Activated CD4-positive, alpha-beta memory T cell treated with anti-CD3 and anti-CD28 coated beads, Interleukin-2, amount 10 ng/mL, durations not matched to agents 7 days and 5 days (primary cell): ENCODE measurements at regions of chr14 and their contacts with region 1.

Region 1: GRCh38 chr14:64726585-64726890 is 22.3 kb downstream of the PLEKHG3 start:
- DNase-seq: peak; percentile 59
- H3K4me3 Mint-ChIP-seq: no peak overlapping the region
- H3K27ac Mint-ChIP-seq: peak overlapping the region; percentile 96
- H3K4me1 Mint-ChIP-seq: peaks cover 94% of the 10 kb centered on the region
- H3K27me3 Mint-ChIP-seq: no peaks in the 10 kb centered on the region

Region 2: GRCh38 chr14:64625475-64626269 is 100.9 kb before region 1 on chr14:
- CTCF ChIA-PET with region 1: no interaction called
- POLR2A ChIA-PET with region 1: no interaction called
- DNase-seq: no peak
- H3K4me3 Mint-ChIP-seq: no peak overlapping the region
- H3K27ac Mint-ChIP-seq: no peak overlapping the region
- H3K4me1 Mint-ChIP-seq: peaks cover 12% of the 10 kb centered on the region
- H3K27me3 Mint-ChIP-seq: peaks cover 13% of the 10 kb centered on the region

Region 3: GRCh38 chr14:64757601-64758000 is 31.1 kb after region 1 on chr14:
- CTCF ChIA-PET with region 1: interaction called, 11 read pairs
- POLR2A ChIA-PET with region 1: interaction called, 22 read pairs
- DNase-seq: no peak
- H3K4me3 Mint-ChIP-seq: no peak overlapping the region
- H3K27ac Mint-ChIP-seq: peak overlapping the region; percentile 95
- H3K4me1 Mint-ChIP-seq: peaks cover 84% of the 10 kb centered on the region
- H3K27me3 Mint-ChIP-seq: peaks cover 8% of the 10 kb centered on the region

Region 4: GRCh38 chr14:64764641-64765520 is 38.3 kb after region 1 on chr14:
- CTCF ChIA-PET with region 1: interaction called, 11 read pairs
- POLR2A ChIA-PET with region 1: interaction called, 6 read pairs
- DNase-seq: peak; percentile 75
- H3K4me3 Mint-ChIP-seq: no peak overlapping the region
- H3K27ac Mint-ChIP-seq: no peak overlapping the region
- H3K4me1 Mint-ChIP-seq: peaks cover 65% of the 10 kb centered on the region
- H3K27me3 Mint-ChIP-seq: peaks cover 8% of the 10 kb centered on the region

Region 5: GRCh38 chr14:64942531-64943111 is 216.1 kb after region 1 on chr14 and contains the start of gene GPX2:
- CTCF ChIA-PET with region 1: no interaction called
- POLR2A ChIA-PET with region 1: no interaction called
- DNase-seq: no peak
- H3K4me3 Mint-ChIP-seq: no peak within 1 kb of the TSS
- H3K27ac Mint-ChIP-seq: no peak within 1 kb of the TSS
- H3K4me1 Mint-ChIP-seq: peaks cover 29% of the 10 kb centered on the region
- H3K27me3 Mint-ChIP-seq: no peaks in the 10 kb centered on the region
- total RNA-seq, gene GPX2: not detected